ENCODE measurements at regions of chr19 and their contacts with region 1.

Region 1: GRCh38 chr19:56594783-56595547 is at the start of gene ZNF71:
- DNase-seq: peak; percentile 96
- ATAC-seq: peak; percentile 99
- total RNA-seq, gene ZNF71: 6.4 TPM

Region 2: GRCh38 chr19:56474308-56474707 is 120.7 kb before region 1 on chr19:
- intact Hi-C with region 1: no loop called
- DNase-seq: no peak
- ATAC-seq: no peak

Region 3: DNA sequence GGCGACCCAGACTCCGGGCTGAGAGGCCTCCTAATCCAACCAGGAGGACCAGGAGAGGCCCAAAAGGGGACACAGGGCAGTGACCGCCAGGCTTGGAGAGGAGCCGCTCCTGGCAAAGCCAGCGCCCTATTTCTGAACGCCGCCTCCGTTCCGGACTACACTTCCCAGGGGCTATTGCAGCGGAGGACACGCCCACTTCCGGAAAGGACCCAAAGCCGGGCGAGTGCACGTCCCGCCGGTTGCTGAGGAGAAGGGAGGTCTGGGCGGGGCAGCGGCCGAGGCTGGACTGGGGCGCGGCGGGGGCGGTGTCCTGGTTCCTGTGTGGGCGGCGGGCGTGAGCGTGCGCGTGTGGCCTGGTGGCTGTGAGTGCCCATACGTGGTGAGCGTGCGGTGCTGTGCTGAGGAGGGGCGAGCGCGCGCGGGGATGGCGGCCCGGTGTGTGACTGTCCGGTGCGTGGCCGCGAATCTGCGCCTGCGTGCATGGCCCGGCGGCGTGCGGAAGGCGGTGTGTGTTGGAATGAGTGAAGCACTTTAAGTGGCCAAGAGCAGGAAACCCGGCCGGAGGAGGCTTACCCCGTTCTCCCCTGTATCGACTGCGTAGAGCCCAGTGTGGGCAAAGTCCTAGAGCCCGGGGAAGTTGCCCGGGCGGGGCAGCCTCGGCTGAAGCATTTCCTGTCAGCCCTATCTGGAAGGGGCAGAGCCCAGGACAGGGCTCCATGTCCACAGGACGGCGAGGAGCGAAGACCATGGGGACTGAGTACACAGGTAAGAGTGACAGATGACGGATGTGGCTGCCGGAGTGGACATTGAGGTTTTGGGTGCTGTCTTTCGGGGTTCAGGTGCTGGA is 27.5 kb before region 1 on chr19 and contains the start of gene ZNF470:
- intact Hi-C with region 1: loop called (anchors 2 kb)
- DNase-seq: peak; percentile 96
- ATAC-seq: peak; percentile 100
- total RNA-seq, gene ZNF470: 2.9 TPM